K562 (cell line): ENCODE measurements at regions of chr9 and their contacts with region 1.

Region 1: DNA sequence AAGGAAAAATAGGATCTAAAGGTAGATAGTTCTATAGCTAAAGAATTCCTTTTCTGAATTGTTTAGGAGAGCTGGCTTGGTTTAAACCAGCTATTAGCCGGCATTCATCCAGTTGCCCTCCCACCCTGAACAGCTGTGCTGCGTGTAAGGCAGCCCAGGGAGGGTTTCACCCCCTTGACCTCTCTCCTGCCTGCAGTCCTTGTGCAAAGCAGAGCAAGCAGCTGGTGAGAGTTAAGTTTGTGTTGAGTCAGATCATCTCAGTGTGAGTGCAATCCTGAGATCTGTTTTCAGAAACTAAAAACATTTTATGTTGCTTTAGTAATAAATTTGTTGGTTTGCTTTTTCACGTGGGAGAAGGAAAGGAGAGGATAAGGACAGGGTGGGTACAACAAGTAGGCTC is 13.0 kb downstream of the SLC25A25 start:
- DNase-seq: peak; percentile 56 to 87 (median 67)
- ATAC-seq: peak; percentile 60
- H3K4me3 ChIP-seq: no peak overlapping the region
- H3K27ac ChIP-seq: peak overlapping the region; percentile 99
- H3K4me1 ChIP-seq: peaks cover 58 to 61% of the 10 kb centered on the region in 2 experiments
- H3K27me3 ChIP-seq: no peaks in the 10 kb centered on the region
- CTCF ChIP-seq: no peak
- EP300 ChIP-seq: peak; percentile 16; the same call in 1 of the 2 replicates
- POLR2A ChIP-seq: no peak
- RAD21 ChIP-seq: no peak

Region 2: GRCh38 chr9:127473501-127473900 is 607.6 kb before region 1 on chr9:
- CTCF ChIA-PET with region 1: no interaction called
- POLR2A ChIA-PET with region 1: no interaction called
- in situ Hi-C with region 1: no loop called
- intact Hi-C with region 1: no loop called
- DNase-seq: no peak
- ATAC-seq: no peak
- H3K4me3 ChIP-seq: no peak overlapping the region
- H3K27ac ChIP-seq: no peak overlapping the region
- H3K4me1 ChIP-seq: no peaks in the 10 kb centered on the region
- H3K27me3 ChIP-seq: no peaks in the 10 kb centered on the region
- CTCF ChIP-seq: no peak
- EP300 ChIP-seq: no peak
- POLR2A ChIP-seq: no peak
- RAD21 ChIP-seq: no peak

Region 3: GRCh38 chr9:128048663-128049062 is 32.4 kb before region 1 on chr9:
- CTCF ChIA-PET with region 1: no interaction called
- POLR2A ChIA-PET with region 1: no interaction called
- in situ Hi-C with region 1: no loop called
- intact Hi-C with region 1: loop called (anchors 2 kb)
- DNase-seq: peak in 3 of 4 experiments; percentile 73 to 82 (median 80)
- ATAC-seq: peak; percentile 96
- H3K4me3 ChIP-seq: no peak overlapping the region
- H3K27ac ChIP-seq: no peak overlapping the region
- H3K4me1 ChIP-seq: peaks cover 8 to 12% of the 10 kb centered on the region in 2 experiments
- H3K27me3 ChIP-seq: no peaks in the 10 kb centered on the region
- CTCF ChIP-seq: no peak
- EP300 ChIP-seq: no peak
- POLR2A ChIP-seq: no peak
- RAD21 ChIP-seq: no peak

Region 4: GRCh38 chr9:128067876-128068613 is 13.0 kb before region 1 on chr9 and contains the start of gene SLC25A25:
- CTCF ChIA-PET with region 1: no interaction called
- POLR2A ChIA-PET with region 1: interaction called, 36 read pairs
- in situ Hi-C with region 1: no loop called
- intact Hi-C with region 1: no loop called
- DNase-seq: peak; percentile 96 to 99 (median 98)
- ATAC-seq: peak; percentile 83
- H3K4me3 ChIP-seq: peak within 1 kb of the TSS; percentile 89
- H3K27ac ChIP-seq: peak within 1 kb of the TSS; percentile 95
- H3K4me1 ChIP-seq: peaks cover 33 to 45% of the 10 kb centered on the region in 2 experiments
- H3K27me3 ChIP-seq: no peaks in the 10 kb centered on the region
- CTCF ChIP-seq: no peak
- EP300 ChIP-seq: 0 out of 2 replicates have a peak, but pooled peaks have one; percentile 8
- POLR2A ChIP-seq: no peak
- RAD21 ChIP-seq: no peak
- polyA plus RNA-seq, gene SLC25A25: 0.07 to 0.10 TPM